ENCODE measurements at regions of chr10 and their contacts with region 1.

Region 1: DNA sequence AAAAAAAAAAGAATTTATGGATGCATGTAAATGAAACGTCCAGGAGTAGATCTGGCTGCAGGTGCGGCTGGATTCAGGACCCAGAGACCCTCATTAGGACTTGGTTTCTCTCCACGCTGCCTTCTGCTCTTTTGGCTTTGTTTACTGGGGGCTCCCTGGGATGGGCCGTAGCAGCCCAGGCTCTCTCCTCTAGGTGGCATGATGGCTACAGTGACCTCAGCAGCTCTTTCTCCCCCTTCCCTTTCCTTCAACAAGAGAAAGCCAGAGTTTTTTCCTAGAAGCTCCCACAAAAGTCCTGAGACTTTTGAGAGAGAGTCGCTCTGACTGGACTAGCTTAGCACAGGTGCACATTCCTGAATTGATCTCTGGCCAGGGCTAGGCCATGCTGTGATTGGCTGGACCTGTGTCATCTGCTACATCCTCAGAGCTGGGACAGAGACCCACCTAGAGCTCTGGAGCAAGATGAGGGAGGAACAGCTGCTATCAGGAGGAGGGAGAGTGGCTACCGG is 67.8 kb upstream of the PDCD4 start:
- DNase-seq: peak; percentile 64
- ATAC-seq: peak; percentile 77
- H3K4me3 Mint-ChIP-seq: peak overlapping the region; percentile 2
- H3K27ac Mint-ChIP-seq: peak overlapping the region; percentile 80
- H3K4me1 Mint-ChIP-seq: peaks cover 40% of the 10 kb centered on the region
- H3K27me3 Mint-ChIP-seq: no peaks in the 10 kb centered on the region

Region 2: GRCh38 chr10:110584006-110584405 is 219.9 kb before region 1 on chr10:
- CTCF ChIA-PET with region 1: no interaction called
- POLR2A ChIA-PET with region 1: no interaction called
- DNase-seq: no peak
- ATAC-seq: no peak
- H3K4me3 Mint-ChIP-seq: no peak overlapping the region
- H3K27ac Mint-ChIP-seq: no peak overlapping the region
- H3K4me1 Mint-ChIP-seq: no peaks in the 10 kb centered on the region
- H3K27me3 Mint-ChIP-seq: no peaks in the 10 kb centered on the region

Region 3: DNA sequence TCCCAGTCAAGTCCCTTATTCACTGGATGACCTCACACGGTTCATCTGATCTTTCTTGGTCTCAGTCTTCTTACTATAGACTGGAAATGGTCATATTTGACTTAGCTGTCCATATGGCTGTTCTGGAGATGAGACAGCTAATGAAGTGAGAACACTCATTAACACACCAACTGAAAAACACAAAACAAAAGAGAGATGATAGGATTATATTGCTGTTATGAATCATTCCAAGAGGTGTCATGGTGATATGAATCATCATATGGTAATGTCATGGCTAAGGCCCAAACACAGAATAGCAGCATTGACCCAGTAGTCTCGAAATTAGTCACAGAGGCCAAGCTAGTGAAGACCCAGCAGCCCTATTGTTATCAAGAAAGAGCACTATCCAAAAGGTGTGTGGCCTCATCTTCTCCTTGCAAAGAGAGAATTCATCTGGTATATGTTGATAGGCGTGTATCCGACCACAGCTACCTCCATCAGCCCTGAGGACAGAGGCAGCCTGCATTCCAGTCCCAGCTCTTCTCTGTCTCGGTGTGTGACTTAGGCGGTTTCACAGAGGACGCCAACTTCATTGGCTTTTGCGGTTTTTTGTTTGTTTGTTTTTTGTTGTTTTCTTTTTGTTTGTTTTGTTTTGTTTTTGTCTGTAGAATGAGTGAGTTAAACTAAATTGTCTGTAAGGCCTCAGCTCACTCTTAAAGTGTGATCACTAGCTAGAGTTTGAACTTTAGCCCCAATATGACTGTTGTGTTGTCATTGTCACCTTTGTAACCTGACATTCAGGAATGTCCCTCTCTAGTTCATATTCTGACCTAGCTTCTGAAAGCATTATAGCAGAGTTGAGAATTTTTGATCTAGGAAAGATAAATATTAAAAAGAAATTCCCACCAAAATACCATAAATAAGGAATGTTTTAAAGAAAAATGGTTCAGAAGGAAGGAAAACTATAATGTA is 29.5 kb before region 1 on chr10:
- CTCF ChIA-PET with region 1: interaction called, 16 read pairs
- POLR2A ChIA-PET with region 1: interaction called, 3 read pairs
- DNase-seq: peak; percentile 53
- ATAC-seq: peak; percentile 90
- H3K4me3 Mint-ChIP-seq: no peak overlapping the region
- H3K27ac Mint-ChIP-seq: peak overlapping the region; percentile 71
- H3K4me1 Mint-ChIP-seq: peaks cover 24% of the 10 kb centered on the region
- H3K27me3 Mint-ChIP-seq: no peaks in the 10 kb centered on the region

Region 4: GRCh38 chr10:110818311-110819245 is 14.7 kb after region 1 on chr10:
- CTCF ChIA-PET with region 1: interaction called, 19 read pairs
- POLR2A ChIA-PET with region 1: no interaction called
- DNase-seq: no peak
- ATAC-seq: no peak
- H3K4me3 Mint-ChIP-seq: no peak overlapping the region
- H3K27ac Mint-ChIP-seq: no peak overlapping the region
- H3K4me1 Mint-ChIP-seq: peaks cover 35% of the 10 kb centered on the region
- H3K27me3 Mint-ChIP-seq: no peaks in the 10 kb centered on the region

Region 5: DNA sequence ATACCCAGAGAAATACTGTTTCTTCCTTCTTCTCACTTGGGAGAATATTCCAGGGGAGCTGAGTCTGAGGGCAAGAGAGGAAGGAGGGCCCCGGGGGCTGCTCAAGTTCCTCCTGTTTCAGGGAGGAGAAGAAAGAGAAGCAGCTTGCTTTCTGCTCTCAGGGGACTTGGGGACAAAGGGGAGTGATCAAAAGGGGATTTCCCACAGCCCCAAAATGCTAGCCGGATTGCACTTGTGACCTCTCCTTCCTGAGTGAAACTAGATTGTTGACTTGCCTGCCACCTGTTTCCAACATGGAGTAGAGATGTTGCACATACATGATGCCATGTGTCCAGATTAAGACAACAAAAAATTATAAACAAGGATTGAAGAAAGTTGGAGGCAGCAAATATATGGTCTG is 39.1 kb after region 1 on chr10:
- CTCF ChIA-PET with region 1: interaction called, 25 read pairs
- POLR2A ChIA-PET with region 1: interaction called, 5 read pairs
- DNase-seq: peak; percentile 69
- ATAC-seq: peak; percentile 88
- H3K4me3 Mint-ChIP-seq: peak overlapping the region; percentile 12
- H3K27ac Mint-ChIP-seq: peak overlapping the region; percentile 60
- H3K4me1 Mint-ChIP-seq: peaks cover 50% of the 10 kb centered on the region
- H3K27me3 Mint-ChIP-seq: no peaks in the 10 kb centered on the region

Region 6: DNA sequence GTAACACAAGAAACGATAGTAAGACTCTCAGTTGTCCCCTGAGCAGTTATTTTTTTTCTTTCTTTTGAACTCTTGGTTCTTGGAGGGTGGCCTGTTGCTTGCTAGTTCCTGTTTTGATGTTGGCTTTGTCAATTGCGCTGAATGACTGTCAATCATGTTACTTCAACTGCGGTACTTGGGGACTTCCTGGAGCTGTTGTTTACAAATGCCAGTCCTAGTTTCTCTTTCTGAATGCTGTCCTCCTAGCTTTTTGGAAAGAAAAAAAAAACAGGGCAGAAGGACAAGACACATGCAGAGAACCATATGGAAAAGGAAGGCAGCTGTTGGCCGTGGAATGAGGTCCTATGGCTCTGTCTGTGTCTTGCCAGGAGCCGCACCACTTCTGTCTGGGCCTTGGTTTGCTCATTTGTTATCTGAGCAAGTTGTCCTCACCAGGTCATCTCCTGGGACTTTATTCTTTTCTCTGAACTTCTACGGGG is 60.8 kb after region 1 on chr10:
- CTCF ChIA-PET with region 1: interaction called, 46 read pairs
- POLR2A ChIA-PET with region 1: interaction called, 3 read pairs
- DNase-seq: peak; percentile 81
- ATAC-seq: peak; percentile 69
- H3K4me3 Mint-ChIP-seq: peak overlapping the region; percentile 81
- H3K27ac Mint-ChIP-seq: peak overlapping the region; percentile 96
- H3K4me1 Mint-ChIP-seq: peaks cover 99% of the 10 kb centered on the region
- H3K27me3 Mint-ChIP-seq: no peaks in the 10 kb centered on the region

Region 7: DNA sequence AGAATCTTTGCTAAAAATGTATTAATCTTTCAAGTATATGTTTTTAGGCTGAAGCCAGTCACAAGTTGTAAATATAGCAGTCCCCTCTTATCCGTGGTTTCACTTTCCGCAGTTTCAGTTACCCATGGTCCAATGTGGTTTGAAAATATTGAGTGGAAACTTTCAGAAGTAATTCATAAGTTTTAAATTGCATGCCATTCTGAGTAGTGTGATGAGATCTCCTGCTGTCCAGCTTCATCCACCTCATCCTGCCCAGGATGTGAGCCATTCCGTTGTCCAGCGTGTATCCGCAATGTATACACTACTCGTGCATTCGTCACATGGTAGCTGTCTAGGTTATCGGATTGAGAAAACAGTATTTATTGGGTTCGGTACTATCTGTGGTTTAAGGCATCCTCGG is 80.0 kb after region 1 on chr10:
- CTCF ChIA-PET with region 1: interaction called, 27 read pairs
- POLR2A ChIA-PET with region 1: interaction called, 5 read pairs
- DNase-seq: no peak
- ATAC-seq: peak; percentile 70
- H3K4me3 Mint-ChIP-seq: peak overlapping the region; percentile 73
- H3K27ac Mint-ChIP-seq: peak overlapping the region; percentile 86
- H3K4me1 Mint-ChIP-seq: peaks cover 55% of the 10 kb centered on the region
- H3K27me3 Mint-ChIP-seq: no peaks in the 10 kb centered on the region

Region 8: GRCh38 chr10:110927461-110927860 is 123.6 kb after region 1 on chr10:
- CTCF ChIA-PET with region 1: no interaction called
- POLR2A ChIA-PET with region 1: no interaction called
- DNase-seq: no peak
- ATAC-seq: no peak
- H3K4me3 Mint-ChIP-seq: no peak overlapping the region
- H3K27ac Mint-ChIP-seq: no peak overlapping the region
- H3K4me1 Mint-ChIP-seq: peaks cover 14% of the 10 kb centered on the region
- H3K27me3 Mint-ChIP-seq: no peaks in the 10 kb centered on the region

Region 9: DNA sequence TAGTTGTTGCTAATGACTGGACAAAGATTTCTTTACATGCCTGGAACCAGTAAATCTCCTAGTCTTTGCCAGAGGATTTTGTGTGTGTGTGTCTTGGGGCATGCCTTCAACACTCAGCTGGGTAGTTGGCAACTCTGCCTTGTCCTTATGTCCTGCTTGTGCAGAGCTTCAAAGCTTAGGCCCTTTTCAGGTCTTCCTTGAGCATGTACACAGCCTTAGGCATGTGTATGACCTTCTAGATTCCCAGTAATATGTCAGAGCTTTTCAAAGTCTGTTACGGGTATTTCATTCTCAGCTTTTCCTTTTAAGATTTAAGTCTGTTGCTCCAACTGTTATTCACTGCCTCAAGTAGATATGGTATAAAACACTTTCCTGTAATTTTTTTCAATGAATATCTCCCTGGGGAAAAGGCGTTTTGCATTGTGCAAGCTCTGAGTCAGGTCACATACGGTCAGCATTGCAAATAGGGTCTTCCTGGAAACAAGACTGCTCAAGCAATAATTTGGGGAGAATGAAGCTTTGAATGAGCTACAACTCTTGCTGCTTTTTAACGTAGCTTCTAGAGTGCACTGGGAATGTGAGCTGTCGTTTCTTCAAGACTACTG is 141.0 kb after region 1 on chr10:
- CTCF ChIA-PET with region 1: no interaction called
- POLR2A ChIA-PET with region 1: no interaction called
- DNase-seq: no peak
- ATAC-seq: no peak
- H3K4me3 Mint-ChIP-seq: no peak overlapping the region
- H3K27ac Mint-ChIP-seq: no peak overlapping the region
- H3K4me1 Mint-ChIP-seq: peaks cover 14% of the 10 kb centered on the region
- H3K27me3 Mint-ChIP-seq: no peaks in the 10 kb centered on the region

Measured in activated CD8-positive, alpha-beta T cell treated with anti-CD3 and anti-CD28 coated beads, Interleukin-2, amount 10 ng/mL, durations not matched to agents 7 days and 5 days (primary cell).